Activated CD4-positive, alpha-beta T cell treated with anti-CD3 and anti-CD28 coated beads, Interleukin-2, amount 10 ng/mL, durations not matched to agents 24 days and 14 days (primary cell): ENCODE measurements at regions of chr12 and their contacts with region 1.

Region 1: GRCh38 chr12:47032644-47033043 is 46.8 kb upstream of the PCED1B start:
- DNase-seq: peak; percentile 72
- H3K4me3 Mint-ChIP-seq: no peak overlapping the region
- H3K27ac Mint-ChIP-seq: no peak overlapping the region
- H3K4me1 Mint-ChIP-seq: peaks cover 13% of the 10 kb centered on the region
- H3K27me3 Mint-ChIP-seq: peaks cover 2% of the 10 kb centered on the region

Region 2: GRCh38 chr12:46915082-46915481 is 117.6 kb before region 1 on chr12:
- intact Hi-C with region 1: no loop called
- DNase-seq: no peak
- H3K4me3 Mint-ChIP-seq: no peak overlapping the region
- H3K27ac Mint-ChIP-seq: no peak overlapping the region
- H3K4me1 Mint-ChIP-seq: no peaks in the 10 kb centered on the region
- H3K27me3 Mint-ChIP-seq: peaks cover 19% of the 10 kb centered on the region

Region 3: GRCh38 chr12:47190271-47190750 is 157.7 kb after region 1 on chr12:
- intact Hi-C with region 1: loop called (anchors 5 kb)
- DNase-seq: no peak
- H3K4me3 Mint-ChIP-seq: peak overlapping the region; percentile 66
- H3K27ac Mint-ChIP-seq: peak overlapping the region; percentile 81
- H3K4me1 Mint-ChIP-seq: peaks cover 63% of the 10 kb centered on the region
- H3K27me3 Mint-ChIP-seq: no peaks in the 10 kb centered on the region

Region 4: DNA sequence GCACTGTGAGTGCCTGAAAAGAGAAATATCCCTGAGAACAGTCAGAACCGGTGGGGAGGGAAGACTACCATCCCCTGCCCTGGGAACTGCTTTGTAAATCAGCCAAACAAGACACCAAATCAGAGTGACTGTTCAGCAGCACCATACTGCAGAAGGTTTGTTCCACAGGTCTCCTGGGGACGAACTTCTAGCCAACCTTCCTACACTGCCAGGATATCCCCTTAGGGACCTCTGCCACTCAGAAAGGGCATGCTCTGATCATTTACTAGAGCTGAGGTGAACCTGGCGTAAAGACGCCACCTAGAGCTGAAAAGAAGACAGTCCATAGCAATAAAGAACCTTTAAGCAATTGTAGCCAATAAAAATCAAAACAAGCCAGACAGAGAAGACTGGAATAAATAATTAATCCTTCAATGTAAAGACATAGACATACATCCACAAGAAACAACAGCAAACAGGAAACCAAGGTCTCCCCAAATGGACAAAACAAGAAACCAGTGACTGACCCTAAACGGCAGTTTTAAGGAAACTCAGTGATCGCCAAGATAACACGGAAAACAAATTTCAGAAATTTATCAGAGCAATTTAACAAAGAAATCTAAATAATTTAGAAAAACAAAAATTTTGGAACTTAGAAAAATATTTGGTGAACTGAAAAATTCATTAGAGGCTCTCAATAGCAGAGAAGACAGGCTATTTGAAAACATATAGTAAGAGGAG is 275.2 kb after region 1 on chr12:
- intact Hi-C with region 1: loop called (anchors 1 kb)
- DNase-seq: peak; percentile 88
- H3K4me3 Mint-ChIP-seq: peak overlapping the region; percentile 88
- H3K27ac Mint-ChIP-seq: peak overlapping the region; percentile 88
- H3K4me1 Mint-ChIP-seq: peaks cover 51% of the 10 kb centered on the region
- H3K27me3 Mint-ChIP-seq: no peaks in the 10 kb centered on the region

Region 5: GRCh38 chr12:47413806-47414205 is 381.2 kb after region 1 on chr12:
- intact Hi-C with region 1: loop called (anchors 5 kb)
- DNase-seq: no peak
- H3K4me3 Mint-ChIP-seq: no peak overlapping the region
- H3K27ac Mint-ChIP-seq: peak overlapping the region; percentile 39
- H3K4me1 Mint-ChIP-seq: peaks cover 35% of the 10 kb centered on the region
- H3K27me3 Mint-ChIP-seq: no peaks in the 10 kb centered on the region

Region 6: DNA sequence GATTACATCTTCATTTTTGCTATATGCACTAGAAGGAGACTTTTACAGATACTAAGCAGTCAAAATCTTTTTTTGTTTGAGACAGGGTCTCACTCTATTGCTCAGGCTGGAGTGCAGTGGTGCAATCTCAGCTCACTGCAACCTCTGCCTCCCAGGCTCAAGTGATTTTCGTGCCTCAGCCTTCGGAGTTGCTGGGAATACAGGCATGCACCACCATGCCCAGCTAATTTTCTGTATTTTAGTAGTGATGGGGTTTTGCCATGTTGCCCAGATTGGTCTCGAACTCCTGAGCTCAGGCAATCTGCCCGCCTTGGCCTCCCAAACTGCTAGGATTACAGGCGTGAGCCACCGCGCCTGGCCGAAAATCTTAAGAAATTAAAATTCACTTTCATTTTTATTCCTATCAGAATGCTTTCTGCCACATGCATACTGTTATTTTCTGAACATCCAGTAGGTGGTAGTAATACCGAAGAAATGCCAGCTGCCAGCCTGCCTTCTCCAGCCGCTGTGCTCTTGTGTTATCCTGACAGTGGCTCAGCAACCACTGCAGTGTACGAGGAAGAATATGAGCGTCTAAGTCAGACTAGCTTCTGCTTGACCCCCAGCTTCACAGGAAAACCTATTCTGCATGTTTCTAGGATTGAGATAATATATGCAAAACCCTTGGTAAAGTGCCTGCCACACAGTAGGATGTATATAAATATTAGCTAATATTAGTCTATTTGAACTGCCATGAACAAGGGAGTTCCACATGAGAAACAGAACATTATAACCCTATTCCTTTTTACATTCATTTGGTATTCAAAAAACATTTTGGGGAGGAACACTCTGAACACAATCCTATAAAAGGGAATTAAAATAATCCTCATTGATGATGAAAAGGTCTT is 619.0 kb after region 1 on chr12:
- intact Hi-C with region 1: loop called (anchors 10 kb)
- DNase-seq: peak; percentile 84
- H3K4me3 Mint-ChIP-seq: peak overlapping the region; percentile 7
- H3K27ac Mint-ChIP-seq: peak overlapping the region; percentile 5
- H3K4me1 Mint-ChIP-seq: peaks cover 14% of the 10 kb centered on the region
- H3K27me3 Mint-ChIP-seq: no peaks in the 10 kb centered on the region

Region 7: DNA sequence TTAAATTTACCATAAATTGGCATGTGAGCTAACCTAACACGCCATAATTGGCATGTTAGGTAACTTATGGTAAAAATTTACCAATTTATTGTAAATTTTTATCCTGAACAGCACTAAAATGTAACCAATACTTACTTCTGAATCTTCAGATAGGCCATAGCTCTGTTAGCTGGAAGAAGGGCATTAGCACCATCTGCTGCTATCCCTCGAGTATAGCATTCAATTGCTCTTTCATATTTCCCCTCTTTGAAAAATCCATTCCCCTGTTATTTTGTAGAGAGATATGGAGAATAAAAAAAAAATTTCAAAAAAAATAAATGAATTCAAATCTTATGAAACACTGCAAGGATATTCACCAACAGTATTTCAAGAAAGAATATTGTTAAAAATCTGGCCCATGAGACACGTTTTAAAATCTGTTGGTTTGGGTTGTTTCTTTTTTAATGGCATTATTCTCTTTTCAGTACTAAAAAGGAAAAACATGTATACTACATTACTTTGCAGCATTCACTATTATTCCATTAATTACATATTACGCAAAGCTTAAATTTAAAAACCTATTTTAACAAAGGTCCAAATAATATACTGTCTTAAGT is 654.1 kb after region 1 on chr12:
- intact Hi-C with region 1: loop called (anchors 2 kb)
- DNase-seq: peak; percentile 71
- H3K4me3 Mint-ChIP-seq: no peak overlapping the region
- H3K27ac Mint-ChIP-seq: no peak overlapping the region
- H3K4me1 Mint-ChIP-seq: peaks cover 4% of the 10 kb centered on the region
- H3K27me3 Mint-ChIP-seq: no peaks in the 10 kb centered on the region